Adrenal gland (tissue), 19 donors: ENCODE measurements at regions of chr7 and their contacts with region 1.

Region 1: DNA sequence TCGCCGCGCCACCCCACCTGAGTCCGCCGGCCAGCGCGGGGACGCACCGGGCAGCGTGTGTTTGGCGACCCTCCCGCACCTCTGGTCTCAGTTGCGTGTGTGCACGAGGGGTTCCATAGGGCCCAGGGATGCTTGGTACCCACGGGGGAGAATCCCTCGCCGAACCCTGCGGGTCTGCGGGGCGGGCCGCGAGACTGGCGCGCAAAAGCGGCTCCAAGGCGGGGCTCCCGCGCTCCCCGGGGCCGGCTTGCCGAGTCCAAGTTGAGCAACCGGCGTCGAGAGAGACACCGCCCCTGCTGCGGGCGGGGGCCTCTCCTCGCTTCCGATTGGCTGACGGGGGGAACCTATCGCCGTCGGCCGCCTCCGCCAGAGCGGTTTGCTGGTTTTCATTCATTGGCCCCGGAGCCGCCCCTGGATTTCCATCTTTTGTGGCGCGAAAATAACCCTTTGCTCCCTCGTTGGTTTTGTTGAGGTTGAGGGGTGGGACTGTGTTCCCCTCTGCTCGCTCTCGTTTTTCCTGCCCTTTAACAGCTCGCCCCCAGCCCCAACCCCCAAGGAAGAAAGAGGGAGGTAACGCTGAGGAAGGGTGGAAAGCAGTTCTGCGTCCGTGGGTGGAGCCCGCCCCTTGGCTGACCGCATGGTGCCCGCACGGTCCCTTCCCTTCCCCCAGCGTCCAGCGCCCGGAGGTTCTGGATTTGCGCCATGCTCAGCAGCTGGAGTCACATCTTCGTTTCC is 4.0 kb upstream of the IGF2BP3 start:
- DNase-seq: peak in 3 of 7 donors; percentile 29 to 51 (median 38)
- H3K4me3 ChIP-seq: peak overlapping the region in 1 of 4 donors; percentile 31
- H3K27ac ChIP-seq: no peak overlapping the region
- H3K4me1 ChIP-seq: peaks cover 6 to 24% of the 10 kb centered on the region in 2 donors
- H3K27me3 ChIP-seq: peaks cover 99% of the 10 kb centered on the region
- CTCF ChIP-seq: no peak
- POLR2A ChIP-seq: no peak

Region 2: GRCh38 chr7:23273141-23273599 is 201.1 kb before region 1 on chr7:
- intact Hi-C with region 1: loop called in 1 of 2 experiments (anchors 5 kb)
- DNase-seq: peak; percentile 84 to 97 (median 93)
- H3K4me3 ChIP-seq: no peak overlapping the region
- H3K27ac ChIP-seq: no peak overlapping the region
- H3K4me1 ChIP-seq: peaks cover 0 to 5% of the 10 kb centered on the region in 2 donors
- H3K27me3 ChIP-seq: no peaks in the 10 kb centered on the region
- CTCF ChIP-seq: peak; percentile 52 to 83 (median 70)
- POLR2A ChIP-seq: no peak

Region 3: DNA sequence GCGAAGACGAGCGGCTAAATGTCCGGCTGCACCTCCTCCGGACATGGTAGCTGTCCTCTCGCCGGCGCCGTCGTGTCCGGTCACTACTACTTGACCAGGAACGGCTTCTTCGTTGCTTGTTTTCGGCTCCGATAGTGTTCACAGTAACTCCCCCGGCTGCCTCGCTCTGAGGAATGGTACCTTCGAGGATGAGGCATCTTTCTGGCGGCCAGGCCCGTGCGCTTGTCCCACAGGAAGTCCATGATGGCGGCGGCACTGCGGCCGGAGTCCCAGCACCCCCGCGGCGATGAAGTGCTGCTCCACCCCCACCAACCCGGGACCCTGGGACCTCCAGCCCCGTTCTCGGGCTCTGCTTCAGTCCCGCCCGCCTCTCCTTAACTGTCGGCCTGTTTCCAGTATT is 111.9 kb after region 1 on chr7:
- intact Hi-C with region 1: no loop called
- DNase-seq: no peak
- H3K4me3 ChIP-seq: no peak overlapping the region
- H3K27ac ChIP-seq: no peak overlapping the region
- H3K4me1 ChIP-seq: no peaks in the 10 kb centered on the region
- H3K27me3 ChIP-seq: no peaks in the 10 kb centered on the region
- CTCF ChIP-seq: no peak
- POLR2A ChIP-seq: no peak